Naive thymus-derived CD4-positive, alpha-beta T cell (primary cell): ENCODE measurements at regions of chr19 and their contacts with region 1.

Region 1: DNA sequence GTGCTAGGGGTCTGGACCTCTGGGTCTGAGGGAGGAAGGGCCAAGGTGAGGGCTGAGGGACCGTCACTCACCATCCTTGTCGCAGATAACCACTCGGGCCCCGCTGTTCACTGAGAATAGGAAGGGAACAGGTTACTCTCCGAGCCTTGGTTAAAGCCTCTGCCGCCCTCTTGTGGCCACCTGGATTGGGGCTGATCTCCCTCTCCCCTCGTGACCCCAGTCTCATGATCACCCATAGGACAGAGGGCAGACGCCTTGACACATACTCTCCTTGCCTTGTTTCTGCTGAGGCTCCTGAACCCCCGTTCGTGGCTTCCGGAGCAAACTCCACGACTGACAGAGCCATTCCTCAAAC is 580 bp downstream of the HSD17B14 start:
- DNase-seq: peak; percentile 81 to 93 (median 89)
- ATAC-seq: peak; percentile 95
- H3K4me3 ChIP-seq: peak overlapping the region; percentile 53
- H3K4me3 Mint-ChIP-seq: peak overlapping the region; percentile 85 to 94 (median 90)
- H3K27ac ChIP-seq: peak overlapping the region; percentile 54
- H3K27ac Mint-ChIP-seq: peak overlapping the region; percentile 48 to 96 (median 86)
- H3K4me1 ChIP-seq: peaks cover 12 to 16% of the 10 kb centered on the region in 2 donors
- H3K4me1 Mint-ChIP-seq: peaks cover 16 to 25% (median 23%) of the 10 kb centered on the region in 7 donors
- H3K27me3 ChIP-seq: peaks cover 0 to 5% of the 10 kb centered on the region in 2 donors
- H3K27me3 Mint-ChIP-seq: peaks cover 0 to 11% (median 0%) of the 10 kb centered on the region in 5 donors

Region 2: GRCh38 chr19:48501496-48502350 is 334.0 kb before region 1 on chr19:
- CTCF ChIA-PET with region 1: no interaction called
- POLR2A ChIA-PET with region 1: no interaction called
- intact Hi-C with region 1: loop called in 1 of 2 experiments (anchors 1 kb)
- DNase-seq: peak in 8 of 9 donors; percentile 64 to 89 (median 79)
- ATAC-seq: peak; percentile 83
- H3K4me3 ChIP-seq: peak overlapping the region; percentile 37
- H3K4me3 Mint-ChIP-seq: peak overlapping the region; percentile 70 to 86 (median 80)
- H3K27ac ChIP-seq: peak overlapping the region; percentile 60
- H3K27ac Mint-ChIP-seq: peak overlapping the region; percentile 59 to 95 (median 84)
- H3K4me1 ChIP-seq: peaks cover 0 to 15% of the 10 kb centered on the region in 2 donors
- H3K4me1 Mint-ChIP-seq: peaks cover 0 to 29% (median 19%) of the 10 kb centered on the region in 7 donors
- H3K27me3 ChIP-seq: no peaks in the 10 kb centered on the region
- H3K27me3 Mint-ChIP-seq: peaks cover 0 to 9% (median 0%) of the 10 kb centered on the region in 5 donors

Region 3: GRCh38 chr19:48611872-48612271 is 223.8 kb before region 1 on chr19:
- CTCF ChIA-PET with region 1: no interaction called
- POLR2A ChIA-PET with region 1: no interaction called
- intact Hi-C with region 1: no loop called
- DNase-seq: no peak
- ATAC-seq: no peak
- H3K4me3 ChIP-seq: no peak overlapping the region
- H3K4me3 Mint-ChIP-seq: no peak overlapping the region
- H3K27ac ChIP-seq: no peak overlapping the region
- H3K27ac Mint-ChIP-seq: peak overlapping the region in 1 of 9 donors; percentile 25
- H3K4me1 ChIP-seq: peaks cover 3 to 13% of the 10 kb centered on the region in 2 donors
- H3K4me1 Mint-ChIP-seq: peaks cover 10 to 16% (median 13%) of the 10 kb centered on the region in 7 donors
- H3K27me3 ChIP-seq: no peaks in the 10 kb centered on the region
- H3K27me3 Mint-ChIP-seq: no peaks in the 10 kb centered on the region

Region 4: GRCh38 chr19:48720613-48721296 is 115.0 kb before region 1 on chr19:
- CTCF ChIA-PET with region 1: no interaction called
- POLR2A ChIA-PET with region 1: no interaction called
- intact Hi-C with region 1: loop called in 1 of 2 experiments (anchors 5 kb)
- DNase-seq: peak; percentile 77 to 93 (median 89)
- ATAC-seq: peak; percentile 91
- H3K4me3 ChIP-seq: peak overlapping the region; percentile 92
- H3K4me3 Mint-ChIP-seq: peak overlapping the region; percentile 80 to 99 (median 97)
- H3K27ac ChIP-seq: peak overlapping the region; percentile 80
- H3K27ac Mint-ChIP-seq: peak overlapping the region; percentile 98 to 100 (median 99)
- H3K4me1 ChIP-seq: peaks cover 5 to 17% of the 10 kb centered on the region in 2 donors
- H3K4me1 Mint-ChIP-seq: peaks cover 19 to 30% (median 25%) of the 10 kb centered on the region in 7 donors
- H3K27me3 ChIP-seq: no peaks in the 10 kb centered on the region
- H3K27me3 Mint-ChIP-seq: no peaks in the 10 kb centered on the region

Region 5: DNA sequence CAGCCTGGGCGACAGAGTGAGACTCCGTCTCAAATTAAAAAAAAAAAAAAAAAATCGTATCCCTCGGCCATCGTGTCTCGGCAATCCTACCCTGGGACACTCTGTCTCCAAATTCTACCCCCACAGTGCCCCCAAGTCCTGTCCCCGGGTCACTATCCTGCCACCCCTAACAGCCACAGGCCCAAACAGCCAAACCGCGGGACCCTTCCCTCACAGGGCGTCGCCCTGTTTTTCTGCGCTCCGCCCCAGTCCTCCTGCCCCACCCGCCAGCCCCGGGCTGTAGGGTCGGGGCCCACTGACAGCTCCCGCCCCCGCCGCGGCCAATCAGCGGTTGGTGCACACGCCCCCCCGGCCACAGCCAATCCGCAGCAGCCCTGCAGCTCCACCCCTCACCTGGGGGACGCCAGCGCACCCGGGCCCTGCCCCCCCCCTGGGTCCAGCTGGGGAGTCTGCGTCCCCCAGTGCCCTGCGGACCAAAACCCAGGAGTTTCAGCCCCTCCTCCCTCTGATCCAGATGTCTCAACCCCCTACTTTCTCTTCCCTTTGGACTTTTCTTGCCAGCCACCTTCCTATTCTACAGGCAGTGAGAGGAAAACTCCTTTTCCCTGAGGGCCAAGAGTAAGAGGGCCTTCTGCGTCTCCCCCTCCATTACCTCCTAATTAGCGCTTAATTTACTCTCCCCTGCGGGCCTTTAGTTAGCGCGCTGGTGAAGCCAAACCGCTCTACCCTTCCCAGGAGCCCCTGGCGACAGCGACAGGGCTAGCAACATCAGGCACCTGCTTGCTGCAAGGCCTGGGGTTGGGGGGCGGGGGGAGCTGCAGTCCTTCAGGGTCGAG is 23.4 kb before region 1 on chr19:
- CTCF ChIA-PET with region 1: interaction called, 3 read pairs
- POLR2A ChIA-PET with region 1: no interaction called
- intact Hi-C with region 1: loop called (anchors 2 kb)
- DNase-seq: peak in 8 of 9 donors; percentile 25 to 68 (median 48)
- ATAC-seq: peak; percentile 65
- H3K4me3 ChIP-seq: no peak overlapping the region
- H3K4me3 Mint-ChIP-seq: peak overlapping the region; percentile 76 to 89 (median 82)
- H3K27ac ChIP-seq: peak overlapping the region; percentile 40
- H3K27ac Mint-ChIP-seq: peak overlapping the region; percentile 54 to 87 (median 78)
- H3K4me1 ChIP-seq: peaks cover 10% of the 10 kb centered on the region in 2 donors
- H3K4me1 Mint-ChIP-seq: peaks cover 16 to 49% (median 41%) of the 10 kb centered on the region in 7 donors
- H3K27me3 ChIP-seq: no peaks in the 10 kb centered on the region
- H3K27me3 Mint-ChIP-seq: no peaks in the 10 kb centered on the region

Region 6: DNA sequence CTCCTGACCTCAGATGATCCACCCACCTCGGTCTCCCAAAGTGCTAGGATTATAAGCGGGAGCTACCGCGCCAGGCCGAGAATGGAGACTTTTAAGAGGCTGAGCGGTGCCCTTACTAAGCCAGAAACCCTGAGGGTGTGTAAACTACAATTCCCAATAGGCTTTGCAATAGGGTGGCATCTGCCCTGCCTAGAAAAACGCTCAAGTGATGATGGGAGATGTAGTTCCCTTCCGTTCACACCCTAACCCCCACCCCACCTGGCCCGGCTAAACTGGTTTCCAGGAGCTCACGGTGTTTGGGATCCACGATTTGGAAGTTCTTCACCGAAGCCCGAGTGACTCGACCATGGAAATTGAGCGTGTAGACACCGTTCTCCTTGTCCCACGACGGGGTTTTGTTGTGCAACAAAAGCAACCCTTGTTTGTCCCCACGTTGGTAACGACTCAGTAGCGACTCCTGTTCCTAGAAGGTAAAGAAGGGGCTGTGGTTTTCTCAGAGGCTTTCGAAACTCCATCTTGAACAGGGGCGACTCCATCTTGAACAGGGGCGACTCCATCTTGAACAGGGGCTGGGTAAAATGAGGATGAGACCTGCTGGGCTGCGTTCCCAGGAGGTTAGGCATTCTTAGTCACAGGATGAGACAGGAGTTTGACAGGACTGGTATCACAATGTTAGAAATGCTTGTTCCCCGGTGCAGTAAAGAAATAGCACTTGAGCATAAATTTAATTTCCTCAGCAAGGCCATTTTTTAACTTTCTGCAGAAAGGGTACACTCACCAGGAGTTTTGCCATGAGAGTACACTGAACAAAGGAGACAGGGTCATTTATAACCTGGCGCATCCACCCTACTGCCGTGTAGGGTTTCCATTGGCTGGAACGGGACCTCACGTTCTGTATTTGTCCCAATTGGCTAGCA is 46.3 kb after region 1 on chr19:
- CTCF ChIA-PET with region 1: no interaction called
- POLR2A ChIA-PET with region 1: no interaction called
- intact Hi-C with region 1: no loop called
- DNase-seq: peak in 3 of 9 donors; percentile 21 to 54 (median 25)
- ATAC-seq: peak; percentile 52
- H3K4me3 ChIP-seq: no peak overlapping the region
- H3K4me3 Mint-ChIP-seq: peak overlapping the region in 1 of 10 donors; percentile 45
- H3K27ac ChIP-seq: no peak overlapping the region
- H3K27ac Mint-ChIP-seq: peak overlapping the region in 1 of 9 donors; percentile 83
- H3K4me1 ChIP-seq: no peaks in the 10 kb centered on the region
- H3K4me1 Mint-ChIP-seq: peaks cover 0 to 18% (median 0%) of the 10 kb centered on the region in 7 donors
- H3K27me3 ChIP-seq: no peaks in the 10 kb centered on the region
- H3K27me3 Mint-ChIP-seq: no peaks in the 10 kb centered on the region